ENCODE measurements at regions of chr20 and their contacts with region 1.

Region 1: GRCh38 chr20:6767536-6768227 is at the start of gene BMP2:
- DNase-seq: no peak
- H3K4me3 ChIP-seq: peak within 1 kb of the TSS; percentile 44
- H3K27me3 ChIP-seq: peaks cover 15% of the 10 kb centered on the region
- CTCF ChIP-seq: no peak
- polyA plus RNA-seq, gene BMP2: 0.07 TPM in 2 replicates

Region 2: GRCh38 chr20:6525447-6526303 is 242.0 kb before region 1 on chr20:
- CTCF ChIA-PET with region 1: no interaction called
- POLR2A ChIA-PET with region 1: no interaction called
- DNase-seq: no peak
- H3K4me3 ChIP-seq: no peak overlapping the region
- H3K27me3 ChIP-seq: no peaks in the 10 kb centered on the region
- CTCF ChIP-seq: 0 out of 2 replicates have a peak, but pooled peaks have one; percentile 8

Region 3: DNA sequence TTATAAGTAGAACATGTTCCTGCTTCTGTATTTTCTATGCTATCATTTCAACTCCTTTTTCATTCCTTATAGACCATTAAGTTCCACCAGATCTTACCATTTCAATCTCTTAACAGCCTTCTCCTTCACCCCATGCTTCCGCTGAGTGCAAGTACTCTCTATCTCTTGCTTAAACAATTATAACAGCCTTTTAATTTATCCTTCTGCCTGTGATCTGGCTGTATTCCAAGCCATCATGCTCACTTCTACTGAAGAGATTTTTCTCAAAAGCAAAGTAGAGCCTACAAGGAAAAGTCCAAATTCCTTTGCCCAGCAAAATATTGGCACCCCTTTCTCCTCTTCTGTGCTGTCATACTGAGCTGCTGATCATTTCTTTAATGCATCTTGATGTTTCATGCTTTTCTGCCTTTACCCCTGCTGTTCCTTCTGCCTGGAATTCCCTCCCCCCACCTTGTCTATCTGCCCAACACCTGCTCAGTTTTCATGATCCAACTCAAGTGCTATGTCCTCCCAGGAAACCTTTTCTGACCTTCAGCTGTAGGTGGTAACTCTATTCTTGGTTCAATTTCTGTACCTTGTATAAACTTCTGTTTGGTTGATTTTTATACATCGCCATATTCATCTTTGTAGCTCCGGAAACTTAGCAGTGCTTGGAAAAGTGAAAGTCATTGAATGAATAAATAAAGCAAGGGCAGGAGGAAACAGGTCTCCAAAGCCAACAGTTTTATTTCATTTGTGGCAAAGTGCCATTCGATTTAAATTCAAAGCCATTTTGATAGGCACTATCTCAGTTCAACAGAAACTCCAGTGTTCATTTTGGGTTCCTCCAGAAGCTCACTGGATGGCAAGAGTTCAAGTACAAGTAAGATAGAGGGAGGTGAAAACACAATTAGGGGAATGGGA is 10.7 kb before region 1 on chr20:
- CTCF ChIA-PET with region 1: interaction called, 16 read pairs
- POLR2A ChIA-PET with region 1: no interaction called
- DNase-seq: no peak
- H3K4me3 ChIP-seq: no peak overlapping the region
- H3K27me3 ChIP-seq: no peaks in the 10 kb centered on the region
- CTCF ChIP-seq: no peak

Region 4: GRCh38 chr20:6780433-6781190 is 12.9 kb after region 1 on chr20:
- CTCF ChIA-PET with region 1: interaction called, 14 read pairs
- POLR2A ChIA-PET with region 1: no interaction called
- DNase-seq: no peak
- H3K4me3 ChIP-seq: no peak overlapping the region
- H3K27me3 ChIP-seq: no peaks in the 10 kb centered on the region
- CTCF ChIP-seq: no peak

Region 5: GRCh38 chr20:7285918-7286556 is 518.4 kb after region 1 on chr20:
- CTCF ChIA-PET with region 1: interaction called, 10 read pairs
- POLR2A ChIA-PET with region 1: no interaction called
- DNase-seq: peak; percentile 7
- H3K4me3 ChIP-seq: no peak overlapping the region
- H3K27me3 ChIP-seq: no peaks in the 10 kb centered on the region
- CTCF ChIP-seq: peak; percentile 76